CD4-positive, alpha-beta T cell (primary cell): ENCODE measurements at regions of chr5 and their contacts with region 1.

Region 1: GRCh38 chr5:157180374-157181264 is at the start of gene ITK:
- DNase-seq: peak in 8 of 14 experiments; percentile 29 to 92 (median 53)
- ATAC-seq: peak; percentile 76
- H3K4me3 ChIP-seq: peak within 1 kb of the TSS; percentile 85
- H3K4me3 Mint-ChIP-seq: peak within 1 kb of the TSS; percentile 98
- H3K27ac ChIP-seq: peak within 1 kb of the TSS; percentile 69 to 74
- H3K27ac Mint-ChIP-seq: peak within 1 kb of the TSS; percentile 96
- H3K4me1 ChIP-seq: peaks cover 38% of the 10 kb centered on the region
- H3K4me1 Mint-ChIP-seq: peaks cover 57% of the 10 kb centered on the region
- H3K27me3 ChIP-seq: no peaks in the 10 kb centered on the region
- H3K27me3 Mint-ChIP-seq: no peaks in the 10 kb centered on the region
- CTCF ChIP-seq: no peak
- total RNA-seq, gene ITK: 289 to 292 TPM

Region 2: GRCh38 chr5:157159209-157159751 is 21.3 kb before region 1 on chr5:
- CTCF ChIA-PET with region 1: interaction called, 3 read pairs
- POLR2A ChIA-PET with region 1: interaction called, 10 read pairs
- intact Hi-C with region 1: no loop called
- DNase-seq: peak in 11 of 14 experiments; percentile 23 to 90 (median 44)
- ATAC-seq: peak; percentile 80
- H3K4me3 ChIP-seq: no peak overlapping the region
- H3K4me3 Mint-ChIP-seq: peak overlapping the region; percentile 54
- H3K27ac ChIP-seq: peak overlapping the region; percentile 79 to 93
- H3K27ac Mint-ChIP-seq: peak overlapping the region; percentile 65
- H3K4me1 ChIP-seq: peaks cover 39% of the 10 kb centered on the region
- H3K4me1 Mint-ChIP-seq: peaks cover 69% of the 10 kb centered on the region
- H3K27me3 ChIP-seq: no peaks in the 10 kb centered on the region
- H3K27me3 Mint-ChIP-seq: no peaks in the 10 kb centered on the region
- CTCF ChIP-seq: no peak

Region 3: GRCh38 chr5:157167214-157167621 is 13.4 kb before region 1 on chr5:
- CTCF ChIA-PET with region 1: interaction called, 3 read pairs
- POLR2A ChIA-PET with region 1: interaction called, 20 read pairs
- intact Hi-C with region 1: no loop called
- DNase-seq: peak in 3 of 14 experiments; percentile 44 to 52 (median 46)
- ATAC-seq: no peak
- H3K4me3 ChIP-seq: peak overlapping the region; percentile 21
- H3K4me3 Mint-ChIP-seq: peak overlapping the region; percentile 57
- H3K27ac ChIP-seq: peak overlapping the region in 1 of 2 donors; percentile 35
- H3K27ac Mint-ChIP-seq: peak overlapping the region; percentile 72
- H3K4me1 ChIP-seq: peaks cover 40% of the 10 kb centered on the region
- H3K4me1 Mint-ChIP-seq: peaks cover 70% of the 10 kb centered on the region
- H3K27me3 ChIP-seq: no peaks in the 10 kb centered on the region
- H3K27me3 Mint-ChIP-seq: no peaks in the 10 kb centered on the region
- CTCF ChIP-seq: no peak

Region 4: DNA sequence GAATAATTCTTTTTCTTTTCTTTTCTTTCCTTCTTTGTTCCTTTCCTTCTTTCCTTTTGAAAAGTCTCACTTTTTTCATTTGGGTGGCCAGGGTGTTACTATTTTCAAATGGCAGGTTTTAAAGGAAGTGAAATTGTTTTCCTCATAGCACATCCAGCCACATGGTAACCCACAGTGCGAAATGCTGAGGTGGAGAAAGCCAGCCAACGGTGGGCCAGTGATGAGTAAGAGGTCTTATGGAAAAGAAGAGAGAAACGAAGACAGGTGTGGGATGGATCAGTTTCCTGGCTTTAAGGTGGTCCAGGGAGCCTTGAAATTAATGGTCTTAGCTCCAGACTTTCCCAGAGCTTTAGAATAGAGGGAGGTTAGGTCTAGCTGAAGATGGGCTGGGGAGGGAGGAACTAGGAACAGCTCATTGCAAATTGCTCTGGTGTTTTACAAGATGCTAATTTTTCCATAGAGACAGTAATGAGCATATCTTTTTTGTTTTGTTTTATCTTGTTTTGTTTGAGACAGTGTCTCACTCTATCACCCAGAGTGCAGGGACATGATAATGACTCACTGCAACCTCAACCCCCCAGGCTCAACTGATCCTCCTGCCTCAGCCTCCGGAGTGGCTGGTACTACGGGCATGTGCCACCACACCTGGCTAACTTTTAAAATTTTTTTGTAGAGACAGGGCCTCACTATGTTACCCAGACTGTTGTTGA is 17.8 kb after region 1 on chr5:
- CTCF ChIA-PET with region 1: interaction called, 8 read pairs
- POLR2A ChIA-PET with region 1: interaction called, 148 read pairs
- intact Hi-C with region 1: loop called in 1 of 2 experiments (anchors 1 kb)
- DNase-seq: peak in 13 of 14 experiments; percentile 31 to 80 (median 59)
- ATAC-seq: peak; percentile 39
- H3K4me3 ChIP-seq: no peak overlapping the region
- H3K4me3 Mint-ChIP-seq: peak overlapping the region; percentile 49
- H3K27ac ChIP-seq: peak overlapping the region; percentile 63 to 79
- H3K27ac Mint-ChIP-seq: peak overlapping the region; percentile 96
- H3K4me1 ChIP-seq: peaks cover 80% of the 10 kb centered on the region
- H3K4me1 Mint-ChIP-seq: peaks cover 99% of the 10 kb centered on the region
- H3K27me3 ChIP-seq: no peaks in the 10 kb centered on the region
- H3K27me3 Mint-ChIP-seq: no peaks in the 10 kb centered on the region
- CTCF ChIP-seq: no peak

Region 5: DNA sequence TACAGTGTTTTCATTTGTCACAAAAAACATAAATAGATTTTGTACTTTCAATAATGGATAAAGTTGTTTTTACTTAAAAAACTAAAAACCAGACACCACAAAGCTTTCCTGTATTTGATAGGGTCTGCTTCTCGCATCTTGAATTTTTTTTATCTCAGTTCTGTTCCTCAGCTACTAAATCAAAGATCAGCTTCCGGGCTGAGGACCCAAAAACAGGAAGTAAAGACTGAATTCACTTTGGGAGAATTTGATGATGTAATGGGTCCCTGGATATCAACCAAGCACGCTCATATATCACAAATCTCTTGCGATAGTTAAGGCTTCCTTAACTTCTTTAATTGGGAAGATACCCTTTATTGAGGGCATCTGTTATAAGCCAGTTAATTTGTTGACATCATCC is 24.1 kb after region 1 on chr5:
- CTCF ChIA-PET with region 1: interaction called, 3 read pairs
- POLR2A ChIA-PET with region 1: interaction called, 148 read pairs
- intact Hi-C with region 1: no loop called
- DNase-seq: peak in 4 of 14 experiments; percentile 46 to 80 (median 77)
- ATAC-seq: peak; percentile 56
- H3K4me3 ChIP-seq: no peak overlapping the region
- H3K4me3 Mint-ChIP-seq: peak overlapping the region; percentile 72
- H3K27ac ChIP-seq: peak overlapping the region; percentile 73 to 83
- H3K27ac Mint-ChIP-seq: peak overlapping the region; percentile 96
- H3K4me1 ChIP-seq: peaks cover 86% of the 10 kb centered on the region
- H3K4me1 Mint-ChIP-seq: peaks cover 92% of the 10 kb centered on the region
- H3K27me3 ChIP-seq: no peaks in the 10 kb centered on the region
- H3K27me3 Mint-ChIP-seq: no peaks in the 10 kb centered on the region
- CTCF ChIP-seq: no peak

Region 6: DNA sequence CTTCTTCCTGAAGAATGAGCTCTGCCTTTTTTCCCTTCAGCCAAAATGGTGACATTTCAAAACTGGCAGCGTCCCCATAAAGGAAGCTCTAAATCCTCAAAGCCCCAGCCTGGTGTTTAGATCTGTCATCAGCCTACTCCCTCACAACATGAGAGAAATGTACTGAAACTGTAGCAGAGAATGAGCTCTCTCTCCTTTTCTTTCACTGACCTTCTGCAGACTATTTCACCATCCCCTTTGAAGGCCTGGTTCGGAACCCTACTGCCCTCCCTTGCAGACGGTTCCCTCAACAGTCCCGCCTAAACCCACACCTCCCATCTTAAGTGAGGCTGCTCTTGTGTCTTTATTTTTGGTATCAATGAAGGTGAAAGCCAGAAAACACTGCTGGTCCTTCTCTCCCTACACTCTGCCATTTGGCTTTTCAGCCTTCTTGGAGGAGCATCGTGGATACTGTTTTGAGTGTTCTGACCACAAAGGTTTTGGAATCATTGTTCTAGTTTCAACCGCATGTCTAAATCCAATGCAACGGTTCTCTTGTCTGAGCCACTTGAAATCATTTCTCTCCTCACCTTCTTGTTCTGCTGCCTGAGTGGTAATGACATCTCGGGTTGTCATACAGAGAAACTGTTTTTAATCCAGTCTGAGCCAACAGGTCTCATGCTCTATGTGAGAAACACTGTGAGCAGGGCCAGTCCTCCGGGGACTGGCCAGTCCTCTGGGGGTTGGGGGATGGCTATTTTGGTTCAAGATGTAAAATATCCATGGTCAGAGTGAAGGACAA is 39.1 kb after region 1 on chr5:
- CTCF ChIA-PET with region 1: no interaction called
- POLR2A ChIA-PET with region 1: interaction called, 14 read pairs
- intact Hi-C with region 1: loop called in 1 of 2 experiments (anchors 2 kb)
- DNase-seq: no peak
- ATAC-seq: no peak
- H3K4me3 ChIP-seq: no peak overlapping the region
- H3K4me3 Mint-ChIP-seq: peak overlapping the region; percentile 27
- H3K27ac ChIP-seq: peak overlapping the region; percentile 70 to 72
- H3K27ac Mint-ChIP-seq: peak overlapping the region; percentile 80
- H3K4me1 ChIP-seq: peaks cover 99% of the 10 kb centered on the region
- H3K4me1 Mint-ChIP-seq: peaks cover 85% of the 10 kb centered on the region
- H3K27me3 ChIP-seq: no peaks in the 10 kb centered on the region
- H3K27me3 Mint-ChIP-seq: no peaks in the 10 kb centered on the region
- CTCF ChIP-seq: no peak